ENCODE measurements at regions of chr9 and their contacts with region 1.

Region 1: DNA sequence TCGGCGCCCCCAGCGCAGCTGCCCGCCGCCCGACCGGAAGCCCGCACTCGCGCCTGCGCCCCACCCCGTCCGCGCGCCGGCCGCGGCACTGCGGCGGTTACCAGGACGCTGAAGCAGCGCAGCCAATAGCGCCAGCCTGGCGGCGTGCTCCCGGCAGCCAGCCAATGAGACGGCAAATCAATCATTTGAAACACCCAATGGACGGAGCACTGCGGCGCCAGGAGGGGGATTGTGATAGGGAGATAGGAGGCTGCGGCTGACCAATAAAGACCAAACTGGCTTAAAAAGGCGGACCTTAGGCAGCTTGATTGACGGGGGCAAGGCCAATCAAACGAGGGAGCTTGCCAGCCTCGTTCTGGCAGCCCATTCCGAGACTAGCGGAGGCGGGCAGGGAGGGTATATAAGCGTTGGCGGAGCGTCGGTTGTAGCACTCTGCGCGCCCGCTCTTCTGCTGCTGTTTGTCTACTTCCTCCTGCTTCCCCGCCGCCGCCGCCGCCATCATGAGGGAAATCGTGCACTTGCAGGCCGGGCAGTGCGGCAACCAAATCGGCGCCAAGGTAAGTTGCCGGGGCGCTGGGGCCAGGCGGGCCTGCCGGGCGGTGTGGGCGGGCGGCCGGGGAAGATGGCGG is at the start of gene TUBB4B:
- DNase-seq: peak; percentile 98
- H3K4me3 Mint-ChIP-seq: peak within 1 kb of the TSS; percentile 92
- H3K27ac Mint-ChIP-seq: peak within 1 kb of the TSS; percentile 91
- H3K4me1 Mint-ChIP-seq: peaks cover 22% of the 10 kb centered on the region
- H3K27me3 Mint-ChIP-seq: no peaks in the 10 kb centered on the region
- total RNA-seq, gene TUBB4B: 277 and 280 TPM in 2 replicates

Region 2: DNA sequence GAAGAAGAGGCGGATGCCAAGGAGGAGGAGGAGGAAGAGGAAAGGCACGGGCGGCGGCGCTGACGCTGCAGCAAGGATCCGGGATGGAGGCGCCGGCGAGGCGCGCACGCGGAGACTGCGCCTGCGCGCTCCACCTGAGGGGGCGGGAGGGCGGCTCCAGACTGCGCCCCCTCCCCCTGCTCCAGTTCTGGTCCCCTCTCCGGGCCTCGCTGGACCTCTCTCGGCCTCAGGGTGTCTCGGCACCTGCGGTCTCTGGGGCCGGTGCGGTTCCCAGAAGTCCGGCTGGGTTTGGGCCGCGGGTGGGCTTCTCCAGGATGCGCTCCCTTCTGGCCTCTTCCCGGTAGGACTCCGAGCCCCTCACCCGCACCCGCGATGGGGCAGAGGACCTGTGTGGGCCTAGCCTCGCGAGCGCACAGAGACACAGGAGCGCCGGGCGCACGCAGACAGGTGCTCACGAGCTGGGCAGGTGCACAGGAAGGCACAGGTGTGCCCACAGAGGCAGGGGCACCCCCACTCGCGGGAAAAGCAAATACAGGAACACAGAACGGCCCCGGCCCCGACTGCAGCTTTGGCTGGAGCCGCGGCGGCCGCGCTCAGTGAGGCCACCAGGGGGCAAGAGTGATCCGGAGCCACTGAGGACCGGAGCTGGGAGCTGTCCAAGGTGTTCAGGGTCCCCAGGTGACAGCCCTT is 194.7 kb before region 1 on chr9 and contains the start of gene NPDC1:
- intact Hi-C with region 1: loop called (anchors 5 kb)
- DNase-seq: peak; percentile 81
- H3K4me3 Mint-ChIP-seq: peak within 1 kb of the TSS; percentile 77
- H3K27ac Mint-ChIP-seq: peak within 1 kb of the TSS; percentile 44
- H3K4me1 Mint-ChIP-seq: peaks cover 5% of the 10 kb centered on the region
- H3K27me3 Mint-ChIP-seq: peaks cover 29% of the 10 kb centered on the region
- total RNA-seq, gene NPDC1: 78.2 and 80.1 TPM in 2 replicates

Region 3: DNA sequence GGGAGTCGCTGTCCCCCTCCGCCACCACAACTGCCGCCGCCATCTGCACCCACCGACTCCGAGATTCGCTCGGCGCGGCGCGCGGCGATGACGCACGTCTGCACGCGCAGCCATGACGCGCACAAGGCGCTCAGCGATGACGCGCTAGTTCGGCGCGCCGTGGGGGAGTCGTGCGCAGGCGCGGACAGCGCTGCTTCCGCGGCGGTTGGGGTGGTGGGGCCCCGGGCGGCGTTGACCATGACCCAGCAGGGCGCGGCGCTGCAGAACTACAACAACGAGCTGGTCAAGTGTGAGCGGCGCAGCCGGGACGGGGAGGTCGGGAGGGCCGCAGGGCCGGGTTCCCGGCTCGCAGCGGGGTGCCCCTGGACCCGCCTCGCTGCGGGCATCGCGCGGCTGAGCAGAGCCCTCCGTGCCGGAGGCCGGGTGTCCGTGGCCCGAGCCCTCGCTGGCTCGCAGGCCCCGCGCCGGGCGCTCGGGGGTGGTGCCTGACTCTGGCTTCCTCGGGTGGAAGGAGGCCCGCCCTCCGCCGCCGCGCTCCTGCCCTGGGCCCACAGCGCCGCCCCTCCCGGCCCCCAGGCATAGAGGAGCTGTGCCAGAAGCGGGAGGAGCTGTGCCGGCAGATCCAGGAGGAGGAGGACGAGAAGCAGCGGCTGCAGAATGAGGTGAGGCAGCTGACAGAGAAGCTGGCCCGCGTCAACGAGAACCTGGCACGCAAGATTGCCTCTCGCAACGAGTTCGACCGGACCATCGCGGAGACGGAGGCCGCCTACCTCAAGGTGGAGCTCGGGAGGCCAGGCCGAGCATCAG is 52.3 kb before region 1 on chr9 and contains the starts of genes ANAPC2 and SSNA1:
- intact Hi-C with region 1: loop called (anchors 1 kb)
- DNase-seq: peak; percentile 94
- H3K4me3 Mint-ChIP-seq: peak within 1 kb of the TSS; percentile 97
- H3K27ac Mint-ChIP-seq: peak within 1 kb of the TSS; percentile 87
- H3K4me1 Mint-ChIP-seq: peaks cover 24% of the 10 kb centered on the region
- H3K27me3 Mint-ChIP-seq: peaks cover 4% of the 10 kb centered on the region
- total RNA-seq, gene ANAPC2: 62.5 and 63.6 TPM in 2 replicates
- total RNA-seq, gene SSNA1: 101 and 105 TPM in 2 replicates

Region 4: GRCh38 chr9:137254624-137255447 is 13.9 kb after region 1 on chr9 and contains the start of gene NELFB:
- intact Hi-C with region 1: loop called (anchors 1 kb)
- DNase-seq: peak; percentile 97
- H3K4me3 Mint-ChIP-seq: peak within 1 kb of the TSS; percentile 90
- H3K27ac Mint-ChIP-seq: peak within 1 kb of the TSS; percentile 87
- H3K4me1 Mint-ChIP-seq: peaks cover 5% of the 10 kb centered on the region
- H3K27me3 Mint-ChIP-seq: peaks cover 2% of the 10 kb centered on the region
- total RNA-seq, gene NELFB: 70.8 and 72.1 TPM in 2 replicates